Breast epithelium (tissue), 4 donors: ENCODE measurements at regions of chr4 and their contacts with region 1.

Region 1: DNA sequence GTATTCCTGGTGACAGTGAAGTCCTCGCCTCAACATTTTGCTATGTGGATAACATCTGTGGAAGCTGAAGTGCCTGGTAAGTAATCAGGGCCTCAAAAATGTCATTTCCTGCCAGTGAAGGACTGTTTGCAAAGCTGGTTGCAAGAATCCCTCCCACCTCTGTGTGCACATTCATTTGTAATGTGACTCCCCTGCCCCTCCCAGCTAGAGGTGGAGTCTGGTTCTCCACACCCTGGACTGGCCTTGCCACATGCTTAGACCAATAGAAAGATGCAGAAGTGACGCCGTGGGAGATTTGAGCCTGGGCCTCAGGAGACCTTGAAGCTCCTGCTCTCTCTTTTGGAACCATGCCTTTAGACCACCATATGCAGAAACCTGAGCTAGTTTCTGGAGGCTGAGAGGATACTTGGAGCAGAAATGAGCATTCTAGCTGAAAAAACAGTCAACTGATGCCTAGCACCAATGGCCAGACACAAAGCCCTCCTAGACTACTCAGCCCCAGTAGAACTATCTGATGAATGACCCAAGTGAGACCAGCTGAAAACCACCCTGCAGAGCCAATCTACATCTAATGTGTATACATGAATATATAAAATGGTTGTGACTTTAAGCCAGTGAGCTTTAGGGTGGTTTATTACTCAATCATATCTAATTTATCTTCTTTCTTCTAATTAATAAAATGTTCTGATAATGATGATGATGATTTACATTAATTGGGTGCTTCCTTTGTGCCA is 47.8 kb upstream of the CRMP1 start:
- DNase-seq: no peak
- H3K4me3 ChIP-seq: no peak overlapping the region
- H3K27ac ChIP-seq: no peak overlapping the region
- H3K4me1 ChIP-seq: no peaks in the 10 kb centered on the region
- H3K27me3 ChIP-seq: peaks cover 0 to 25% of the 10 kb centered on the region in 2 donors
- CTCF ChIP-seq: no peak
- POLR2A ChIP-seq: no peak

Region 2: DNA sequence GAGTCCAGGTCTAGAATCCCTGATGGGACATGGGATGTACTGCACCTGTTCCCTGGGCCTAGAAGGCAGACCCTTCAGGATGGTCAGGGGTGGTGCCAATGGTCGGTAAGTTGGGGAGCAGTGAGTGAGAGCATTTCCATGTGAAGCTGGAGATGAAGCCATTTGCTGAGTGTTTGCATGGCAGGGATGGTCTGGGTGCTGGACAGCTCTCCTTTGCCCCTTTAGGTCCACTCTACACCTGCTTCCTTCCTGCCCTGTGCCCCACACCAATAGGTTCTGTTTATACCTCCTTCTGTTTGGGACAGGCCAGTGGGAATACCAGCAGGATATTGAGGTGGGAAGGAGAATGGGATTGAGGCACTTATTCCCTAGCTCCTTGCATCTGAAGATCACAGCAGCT is 708.1 kb before region 1 on chr4:
- intact Hi-C with region 1: loop called (anchors 5 kb)
- DNase-seq: no peak
- H3K4me3 ChIP-seq: no peak overlapping the region
- H3K27ac ChIP-seq: no peak overlapping the region
- H3K4me1 ChIP-seq: no peaks in the 10 kb centered on the region
- H3K27me3 ChIP-seq: no peaks in the 10 kb centered on the region
- CTCF ChIP-seq: no peak
- POLR2A ChIP-seq: no peak

Region 3: GRCh38 chr4:5423670-5424069 is 517.0 kb before region 1 on chr4:
- intact Hi-C with region 1: no loop called
- DNase-seq: no peak
- H3K4me3 ChIP-seq: no peak overlapping the region
- H3K27ac ChIP-seq: no peak overlapping the region
- H3K4me1 ChIP-seq: no peaks in the 10 kb centered on the region
- H3K27me3 ChIP-seq: no peaks in the 10 kb centered on the region
- CTCF ChIP-seq: no peak
- POLR2A ChIP-seq: no peak